ENCODE measurements at regions of chr18 and their contacts with region 1.

Region 1: DNA sequence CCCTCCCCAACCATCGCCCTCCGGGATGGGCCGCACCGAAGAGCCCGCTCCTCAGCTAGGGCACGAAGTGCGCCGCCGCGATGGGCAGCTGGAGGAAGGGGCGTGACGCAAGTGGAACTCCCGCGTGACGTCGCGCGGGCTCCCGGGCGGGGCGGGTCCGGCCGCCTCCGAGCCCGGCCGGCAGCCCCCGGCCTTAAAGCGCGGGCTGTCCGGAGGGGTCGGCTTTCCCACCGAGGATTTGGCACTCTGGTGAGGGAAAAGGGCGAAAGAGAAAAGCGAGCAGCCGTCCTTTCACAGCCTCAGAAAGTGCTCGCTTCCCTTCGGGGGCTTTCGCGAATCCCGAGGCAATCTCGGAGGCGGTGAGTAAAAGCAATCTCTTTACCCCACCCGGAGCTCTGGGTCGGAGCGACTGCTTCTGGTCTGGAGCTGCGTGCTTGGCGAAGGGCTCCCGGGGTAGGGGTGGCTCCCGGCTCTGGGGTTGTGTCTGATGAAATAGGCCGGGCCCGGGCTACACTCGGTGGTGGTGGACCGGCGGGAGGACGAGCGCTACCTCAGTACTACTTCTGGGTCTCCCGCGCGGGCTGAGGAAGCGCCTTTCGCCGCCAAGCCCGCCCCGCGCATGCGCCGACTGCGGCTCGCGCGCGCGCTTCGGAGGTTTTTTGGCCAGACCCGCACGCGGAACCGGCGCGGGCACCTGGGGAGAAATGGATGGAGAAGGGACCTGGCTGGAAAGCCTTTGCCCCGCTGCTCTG is at the start of gene RBBP8:
- DNase-seq: peak; percentile 70 to 90 (median 86)
- H3K4me3 ChIP-seq: peak within 1 kb of the TSS; percentile 59 to 90
- H3K4me3 Mint-ChIP-seq: peak within 1 kb of the TSS; percentile 85 to 94 (median 88)
- H3K27ac ChIP-seq: peak within 1 kb of the TSS; percentile 82
- H3K27ac Mint-ChIP-seq: peak within 1 kb of the TSS; percentile 79 to 98 (median 93)
- H3K4me1 ChIP-seq: peaks cover 7% of the 10 kb centered on the region
- H3K4me1 Mint-ChIP-seq: peaks cover 10 to 16% (median 12%) of the 10 kb centered on the region in 4 donors
- H3K27me3 ChIP-seq: no peaks in the 10 kb centered on the region
- H3K27me3 Mint-ChIP-seq: no peaks in the 10 kb centered on the region
- total RNA-seq, gene RBBP8: 1.4 to 3.0 TPM

Region 2: GRCh38 chr18:22883827-22884226 is 49.6 kb before region 1 on chr18:
- CTCF ChIA-PET with region 1: no interaction called
- POLR2A ChIA-PET with region 1: no interaction called
- intact Hi-C with region 1: no loop called
- DNase-seq: no peak
- H3K4me3 ChIP-seq: no peak overlapping the region
- H3K4me3 Mint-ChIP-seq: no peak overlapping the region
- H3K27ac ChIP-seq: no peak overlapping the region
- H3K27ac Mint-ChIP-seq: no peak overlapping the region
- H3K4me1 ChIP-seq: no peaks in the 10 kb centered on the region
- H3K4me1 Mint-ChIP-seq: no peaks in the 10 kb centered on the region
- H3K27me3 ChIP-seq: no peaks in the 10 kb centered on the region
- H3K27me3 Mint-ChIP-seq: peaks cover 5 to 19% of the 10 kb centered on the region in 2 donors

Region 3: DNA sequence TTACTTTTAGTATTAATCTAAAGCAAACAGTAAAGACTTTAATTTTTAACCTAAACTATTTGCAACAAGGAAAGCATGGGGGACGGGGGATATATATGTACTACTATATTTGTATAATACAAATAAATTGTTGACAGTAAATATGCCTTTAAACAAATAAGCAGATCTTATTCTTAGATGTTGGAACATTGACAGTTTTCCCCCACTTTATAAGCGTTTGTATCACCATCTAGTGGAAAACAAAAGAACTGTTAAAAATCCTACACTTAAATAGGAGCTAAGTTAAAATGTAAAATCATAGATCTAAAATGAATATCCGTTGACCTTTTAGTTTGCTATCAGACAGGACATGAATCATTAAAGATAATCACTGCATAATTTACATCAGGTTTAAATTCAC is 49.8 kb after region 1 on chr18:
- CTCF ChIA-PET with region 1: interaction called, 132 read pairs
- POLR2A ChIA-PET with region 1: interaction called, 5 read pairs
- intact Hi-C with region 1: loop called (anchors 1 kb)
- DNase-seq: peak in 4 of 5 donors; percentile 16 to 31 (median 23)
- H3K4me3 ChIP-seq: no peak overlapping the region
- H3K4me3 Mint-ChIP-seq: no peak overlapping the region
- H3K27ac ChIP-seq: no peak overlapping the region
- H3K27ac Mint-ChIP-seq: no peak overlapping the region
- H3K4me1 ChIP-seq: no peaks in the 10 kb centered on the region
- H3K4me1 Mint-ChIP-seq: peaks cover 0 to 5% (median 4%) of the 10 kb centered on the region in 4 donors
- H3K27me3 ChIP-seq: no peaks in the 10 kb centered on the region
- H3K27me3 Mint-ChIP-seq: no peaks in the 10 kb centered on the region

Region 4: DNA sequence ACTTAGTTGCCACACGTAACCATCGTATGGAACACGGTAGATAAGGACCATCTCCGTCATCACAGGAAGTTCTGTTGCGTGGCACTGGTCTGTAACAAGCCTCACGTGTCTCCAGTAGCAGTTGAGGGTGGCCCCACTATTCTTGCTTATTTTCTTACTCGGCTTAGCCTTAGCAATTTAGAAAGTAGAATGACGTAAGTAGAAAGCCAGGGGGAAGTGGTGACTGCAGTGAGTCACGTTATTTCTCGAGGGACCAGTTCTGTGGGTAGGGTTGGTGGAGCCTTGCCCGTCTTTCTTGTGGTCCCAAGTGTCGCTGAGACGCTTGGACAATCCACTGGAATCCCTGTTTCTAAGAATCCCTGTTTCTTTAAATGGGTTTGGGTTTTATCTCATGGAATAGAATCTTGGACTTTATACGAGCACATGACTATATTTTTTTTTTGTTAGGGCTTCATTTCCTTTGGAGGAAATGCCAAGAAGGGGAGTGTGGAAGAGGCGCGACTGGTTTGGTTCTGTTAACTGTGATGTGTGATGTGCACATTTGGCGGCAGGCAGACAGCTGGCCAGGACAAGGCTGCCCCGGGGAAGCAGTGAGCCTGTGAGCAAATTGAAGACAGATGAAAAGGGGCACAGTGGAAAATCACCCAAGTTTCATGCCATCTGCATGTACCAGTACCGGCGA is 298.1 kb after region 1 on chr18:
- CTCF ChIA-PET with region 1: no interaction called
- POLR2A ChIA-PET with region 1: no interaction called
- intact Hi-C with region 1: loop called (anchors 5 kb)
- DNase-seq: peak; percentile 75 to 93 (median 83)
- H3K4me3 ChIP-seq: peak overlapping the region in 1 of 2 donors; percentile 27
- H3K4me3 Mint-ChIP-seq: peak overlapping the region; percentile 10 to 83 (median 66)
- H3K27ac ChIP-seq: peak overlapping the region; percentile 34
- H3K27ac Mint-ChIP-seq: peak overlapping the region; percentile 93 to 97 (median 95)
- H3K4me1 ChIP-seq: peaks cover 15% of the 10 kb centered on the region
- H3K4me1 Mint-ChIP-seq: peaks cover 8 to 47% (median 17%) of the 10 kb centered on the region in 4 donors
- H3K27me3 ChIP-seq: no peaks in the 10 kb centered on the region
- H3K27me3 Mint-ChIP-seq: no peaks in the 10 kb centered on the region

Region 5: GRCh38 chr18:23412351-23412964 is 479.1 kb after region 1 on chr18:
- CTCF ChIA-PET with region 1: interaction called, 60 read pairs
- POLR2A ChIA-PET with region 1: interaction called, 4 read pairs
- intact Hi-C with region 1: no loop called
- DNase-seq: no peak
- H3K4me3 ChIP-seq: no peak overlapping the region
- H3K4me3 Mint-ChIP-seq: no peak overlapping the region
- H3K27ac ChIP-seq: no peak overlapping the region
- H3K27ac Mint-ChIP-seq: no peak overlapping the region
- H3K4me1 ChIP-seq: no peaks in the 10 kb centered on the region
- H3K4me1 Mint-ChIP-seq: peaks cover 0 to 1% (median 0%) of the 10 kb centered on the region in 4 donors
- H3K27me3 ChIP-seq: no peaks in the 10 kb centered on the region
- H3K27me3 Mint-ChIP-seq: no peaks in the 10 kb centered on the region

Region 6: DNA sequence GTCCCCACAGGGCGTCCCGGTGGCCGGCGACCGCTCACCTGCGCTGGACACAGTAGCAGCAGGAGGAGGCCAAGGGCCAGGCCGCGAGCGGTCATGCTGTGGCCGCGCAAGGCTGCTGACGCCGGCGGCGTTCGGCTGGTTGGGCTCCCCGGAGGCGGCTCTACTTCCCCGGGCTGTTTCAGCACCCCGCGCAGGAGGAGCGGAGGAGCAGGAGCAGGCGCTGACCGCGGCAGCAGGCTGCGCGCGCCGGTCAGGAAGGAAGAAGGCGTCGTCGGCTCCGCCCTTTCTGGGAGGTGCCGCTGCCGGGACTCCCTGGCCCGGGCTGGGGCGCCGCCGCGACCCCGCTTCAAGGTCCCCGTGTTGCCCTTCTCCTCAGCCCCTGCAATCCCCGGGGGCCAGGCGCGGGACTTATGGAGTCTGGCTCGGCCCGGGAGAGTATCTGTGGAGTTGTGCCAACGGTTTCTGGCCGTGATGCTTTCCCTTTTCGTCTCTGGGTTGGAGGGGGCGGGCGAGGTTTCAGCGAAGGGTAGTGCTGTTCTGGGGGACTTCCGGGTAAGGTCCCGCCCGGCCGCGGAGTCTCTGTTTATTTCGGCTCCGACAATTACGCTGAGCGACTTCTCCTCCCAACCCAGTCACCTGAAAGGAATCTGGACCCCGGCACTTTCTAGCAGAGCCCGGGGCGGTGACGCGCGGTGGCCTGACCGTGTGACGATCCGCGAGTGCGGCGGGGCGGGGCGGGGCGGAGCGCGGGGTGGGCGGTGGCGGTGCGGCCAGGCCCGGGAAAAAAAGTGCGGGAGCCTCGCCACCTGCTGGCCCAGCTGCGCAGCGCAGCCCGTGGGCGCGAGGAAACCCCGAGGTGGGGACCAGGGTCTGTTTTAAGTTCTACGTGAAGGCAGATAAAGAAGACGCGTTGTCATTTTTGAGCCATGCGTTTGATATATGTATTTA is 653.1 kb after region 1 on chr18 and contains the start of gene NPC1:
- CTCF ChIA-PET with region 1: no interaction called
- POLR2A ChIA-PET with region 1: no interaction called
- intact Hi-C with region 1: loop called (anchors 5 kb)
- DNase-seq: peak; percentile 91 to 95 (median 94)
- H3K4me3 ChIP-seq: peak within 1 kb of the TSS; percentile 77 to 87
- H3K4me3 Mint-ChIP-seq: peak within 1 kb of the TSS; percentile 87 to 96 (median 94)
- H3K27ac ChIP-seq: peak within 1 kb of the TSS; percentile 97
- H3K27ac Mint-ChIP-seq: peak within 1 kb of the TSS; percentile 95 to 98 (median 97)
- H3K4me1 ChIP-seq: peaks cover 46% of the 10 kb centered on the region
- H3K4me1 Mint-ChIP-seq: peaks cover 25 to 47% (median 37%) of the 10 kb centered on the region in 4 donors
- H3K27me3 ChIP-seq: no peaks in the 10 kb centered on the region
- H3K27me3 Mint-ChIP-seq: peaks cover 0 to 4% of the 10 kb centered on the region in 2 donors
- total RNA-seq, gene NPC1: 62.9 to 64.5 TPM

Measured in CD4-positive, alpha-beta memory T cell (primary cell).